MCF 10A (cell line): ENCODE measurements at regions of chr11 and their contacts with region 1.

Region 1: DNA sequence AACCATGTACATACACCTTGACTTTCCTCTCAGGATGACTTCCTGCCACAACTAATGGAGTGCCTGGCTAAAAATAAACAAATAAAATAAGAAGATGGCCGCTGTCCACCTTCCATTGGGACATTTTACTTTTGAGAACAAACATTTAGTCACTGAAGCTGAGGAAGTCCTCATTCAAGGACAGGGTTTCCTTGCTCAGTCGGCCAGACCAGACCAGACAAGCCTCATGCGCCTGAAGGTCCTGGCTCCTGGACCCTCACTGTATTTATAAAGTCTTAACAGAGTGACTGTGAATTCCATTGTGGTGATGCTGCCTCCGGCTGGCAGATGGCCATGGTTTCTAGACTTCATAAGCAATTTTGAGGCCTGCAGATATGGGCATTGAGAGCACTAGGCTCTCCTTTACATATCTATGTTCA is 114.5 kb downstream of the MAML2 start:
- DNase-seq: peak; percentile 92
- H3K4me3 Mint-ChIP-seq: no peak overlapping the region
- H3K27ac Mint-ChIP-seq: peak overlapping the region; percentile 97
- H3K4me1 Mint-ChIP-seq: peaks cover 48% of the 10 kb centered on the region
- H3K27me3 Mint-ChIP-seq: no peaks in the 10 kb centered on the region
- CTCF ChIP-seq: no peak

Region 2: GRCh38 chr11:96155627-96156378 is 72.7 kb before region 1 on chr11:
- CTCF ChIA-PET with region 1: no interaction called
- POLR2A ChIA-PET with region 1: no interaction called
- intact Hi-C with region 1: no loop called
- DNase-seq: peak; percentile 93
- H3K4me3 Mint-ChIP-seq: peak overlapping the region; percentile 51
- H3K27ac Mint-ChIP-seq: peak overlapping the region; percentile 88
- H3K4me1 Mint-ChIP-seq: peaks cover 29% of the 10 kb centered on the region
- H3K27me3 Mint-ChIP-seq: no peaks in the 10 kb centered on the region
- CTCF ChIP-seq: peak; percentile 28

Region 3: GRCh38 chr11:96193745-96194443 is 34.6 kb before region 1 on chr11:
- CTCF ChIA-PET with region 1: no interaction called
- POLR2A ChIA-PET with region 1: interaction called, 15 read pairs
- intact Hi-C with region 1: no loop called
- DNase-seq: no peak
- H3K4me3 Mint-ChIP-seq: no peak overlapping the region
- H3K27ac Mint-ChIP-seq: peak overlapping the region; percentile 57
- H3K4me1 Mint-ChIP-seq: peaks cover 20% of the 10 kb centered on the region
- H3K27me3 Mint-ChIP-seq: no peaks in the 10 kb centered on the region
- CTCF ChIP-seq: no peak

Region 4: DNA sequence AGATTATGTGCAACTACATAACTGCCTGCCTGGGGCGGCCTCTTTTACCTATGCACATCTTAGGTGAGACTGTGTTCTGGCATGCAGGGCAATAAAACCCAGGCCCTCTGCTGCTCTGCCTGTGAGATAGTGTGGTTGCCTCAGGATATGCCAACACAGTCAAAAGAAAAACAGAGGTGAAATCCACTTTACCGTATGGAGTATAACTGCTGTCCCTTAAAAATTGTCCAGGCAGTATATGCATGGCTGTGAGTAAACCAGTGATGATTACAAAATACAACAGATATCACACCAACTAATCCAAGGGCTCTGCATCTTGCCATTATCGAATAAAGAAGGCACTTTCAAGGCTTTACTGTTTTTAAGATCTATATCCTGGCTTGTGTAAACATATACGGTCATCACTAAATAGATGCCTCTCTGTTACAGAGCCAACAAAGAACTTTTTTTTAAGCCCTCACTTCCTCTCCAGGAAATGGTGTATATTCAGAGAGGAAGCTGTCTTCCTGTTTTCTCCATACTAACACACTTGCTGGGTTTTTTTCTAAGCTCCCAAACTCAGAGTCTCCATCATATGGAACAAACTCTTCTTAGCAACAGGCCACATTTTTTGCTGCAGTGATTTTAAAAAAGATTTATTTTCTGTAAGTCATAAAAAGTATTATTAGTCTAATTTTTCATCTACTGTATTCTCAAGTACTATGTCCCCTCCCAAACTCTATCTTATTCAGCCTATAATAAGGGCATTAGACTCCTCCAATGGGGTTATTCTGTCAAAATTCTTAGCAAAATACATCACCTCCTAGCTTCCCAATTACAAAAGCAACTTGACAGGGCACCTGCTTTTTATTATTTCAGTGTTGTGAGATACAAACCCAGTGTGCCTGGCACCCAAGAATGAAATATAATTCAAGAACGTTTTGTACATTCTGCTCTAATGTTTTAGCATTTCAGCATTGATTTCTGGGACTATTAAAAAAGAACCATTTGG is 20.7 kb before region 1 on chr11:
- CTCF ChIA-PET with region 1: interaction called, 7 read pairs
- POLR2A ChIA-PET with region 1: interaction called, 11 read pairs
- intact Hi-C with region 1: no loop called
- DNase-seq: peak; percentile 52
- H3K4me3 Mint-ChIP-seq: peak overlapping the region; percentile 6
- H3K27ac Mint-ChIP-seq: peak overlapping the region; percentile 81
- H3K4me1 Mint-ChIP-seq: peaks cover 36% of the 10 kb centered on the region
- H3K27me3 Mint-ChIP-seq: no peaks in the 10 kb centered on the region
- CTCF ChIP-seq: no peak

Region 5: GRCh38 chr11:96306933-96307775 is 78.7 kb after region 1 on chr11:
- CTCF ChIA-PET with region 1: interaction called, 6 read pairs
- POLR2A ChIA-PET with region 1: interaction called, 12 read pairs
- intact Hi-C with region 1: no loop called
- DNase-seq: peak; percentile 100
- H3K4me3 Mint-ChIP-seq: peak overlapping the region; percentile 68
- H3K27ac Mint-ChIP-seq: peak overlapping the region; percentile 97
- H3K4me1 Mint-ChIP-seq: peaks cover 59% of the 10 kb centered on the region
- H3K27me3 Mint-ChIP-seq: no peaks in the 10 kb centered on the region
- CTCF ChIP-seq: no peak

Region 6: GRCh38 chr11:96412761-96413381 is 184.4 kb after region 1 on chr11:
- CTCF ChIA-PET with region 1: no interaction called
- POLR2A ChIA-PET with region 1: no interaction called
- intact Hi-C with region 1: no loop called
- DNase-seq: no peak
- H3K4me3 Mint-ChIP-seq: no peak overlapping the region
- H3K27ac Mint-ChIP-seq: no peak overlapping the region
- H3K4me1 Mint-ChIP-seq: no peaks in the 10 kb centered on the region
- H3K27me3 Mint-ChIP-seq: peaks cover 35% of the 10 kb centered on the region
- CTCF ChIP-seq: no peak

Region 7: DNA sequence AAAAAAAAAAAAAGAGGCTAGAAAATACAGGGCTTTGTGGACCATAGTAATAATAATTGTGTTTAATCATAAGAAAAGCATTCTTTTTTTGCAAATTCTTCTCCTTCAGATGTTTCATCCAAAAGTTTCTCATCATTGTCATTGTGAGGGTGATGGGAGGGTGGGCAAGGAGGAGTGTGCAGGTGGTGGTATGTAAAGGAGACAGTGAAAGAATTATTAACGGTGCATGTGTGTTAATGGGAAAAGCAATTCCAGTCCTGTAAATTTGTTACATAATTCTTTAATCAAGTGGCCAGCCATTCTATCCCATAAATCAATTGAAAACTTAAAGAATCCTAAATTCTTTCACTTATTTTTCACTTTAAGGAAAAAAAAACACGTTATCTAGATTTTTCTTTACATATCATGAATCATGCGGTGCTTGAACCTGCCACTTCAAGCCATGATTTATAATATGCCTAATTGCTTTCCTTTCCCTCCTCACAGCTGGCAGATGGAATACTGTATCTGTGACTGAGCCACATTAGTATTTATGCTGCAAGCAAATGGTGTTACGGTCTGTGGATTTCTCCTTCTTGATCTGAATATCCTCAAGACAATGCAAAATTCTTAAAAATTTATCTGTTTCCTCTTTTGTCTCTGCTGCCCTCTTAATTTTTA is 479.9 kb after region 1 on chr11:
- CTCF ChIA-PET with region 1: no interaction called
- POLR2A ChIA-PET with region 1: no interaction called
- intact Hi-C with region 1: no loop called
- DNase-seq: no peak
- H3K4me3 Mint-ChIP-seq: no peak overlapping the region
- H3K27ac Mint-ChIP-seq: no peak overlapping the region
- H3K4me1 Mint-ChIP-seq: no peaks in the 10 kb centered on the region
- H3K27me3 Mint-ChIP-seq: peaks cover 24% of the 10 kb centered on the region
- CTCF ChIP-seq: no peak